ENCODE measurements at regions of chr17 and their contacts with region 1.

Region 1: GRCh38 chr17:81959362-81960129 is 1.4 kb downstream of the NOTUM start:
- DNase-seq: no peak
- ATAC-seq: peak; percentile 96
- H3K4me3 ChIP-seq: no peak overlapping the region
- H3K27ac ChIP-seq: no peak overlapping the region
- H3K4me1 ChIP-seq: no peaks in the 10 kb centered on the region
- H3K27me3 ChIP-seq: peaks cover 8 to 20% of the 10 kb centered on the region in 2 experiments
- CTCF ChIP-seq: peak; percentile 73 to 99 (median 74); a peak in 4 of 6 replicates
- EP300 ChIP-seq: no peak
- POLR2A ChIP-seq: no peak
- RAD21 ChIP-seq: peak; percentile 95

Region 2: GRCh38 chr17:82037113-82037888 is 77.8 kb after region 1 on chr17 and contains the start of gene DCXR:
- CTCF ChIA-PET with region 1: interaction called, 11 read pairs
- POLR2A ChIA-PET with region 1: no interaction called
- RAD21 ChIA-PET with region 1: interaction called, 12 read pairs
- SMC1A ChIA-PET with region 1: no interaction called
- in situ Hi-C with region 1: no loop called
- intact Hi-C with region 1: no loop called
- DNase-seq: peak; percentile 72
- ATAC-seq: peak; percentile 98
- H3K4me3 ChIP-seq: peak within 1 kb of the TSS; percentile 81
- H3K27ac ChIP-seq: peak within 1 kb of the TSS; percentile 89
- H3K4me1 ChIP-seq: peaks cover 10% of the 10 kb centered on the region
- H3K27me3 ChIP-seq: no peaks in the 10 kb centered on the region
- CTCF ChIP-seq: peak; percentile 83 to 94 (median 89)
- EP300 ChIP-seq: no peak
- POLR2A ChIP-seq: peak; percentile 99
- RAD21 ChIP-seq: no peak
- polyA plus RNA-seq, gene DCXR: 12.3 to 44.8 TPM

Measured in GM12878 (cell line).